Naive thymus-derived CD4-positive, alpha-beta T cell (primary cell): ENCODE measurements at regions of chr2 and their contacts with region 1.

Region 1: GRCh38 chr2:234164493-234165413 is 114.3 kb downstream of the SPP2 start:
- DNase-seq: peak in 7 of 9 donors; percentile 19 to 42 (median 37)
- ATAC-seq: peak; percentile 92
- H3K4me3 ChIP-seq: no peak overlapping the region
- H3K4me3 Mint-ChIP-seq: peak overlapping the region in 7 of 10 donors; percentile 18 to 78 (median 50)
- H3K27ac ChIP-seq: no peak overlapping the region
- H3K27ac Mint-ChIP-seq: peak overlapping the region; percentile 2 to 82 (median 51)
- H3K4me1 ChIP-seq: peaks cover 5 to 14% of the 10 kb centered on the region in 2 donors
- H3K4me1 Mint-ChIP-seq: peaks cover 11 to 44% (median 31%) of the 10 kb centered on the region in 7 donors
- H3K27me3 ChIP-seq: no peaks in the 10 kb centered on the region
- H3K27me3 Mint-ChIP-seq: no peaks in the 10 kb centered on the region

Region 2: DNA sequence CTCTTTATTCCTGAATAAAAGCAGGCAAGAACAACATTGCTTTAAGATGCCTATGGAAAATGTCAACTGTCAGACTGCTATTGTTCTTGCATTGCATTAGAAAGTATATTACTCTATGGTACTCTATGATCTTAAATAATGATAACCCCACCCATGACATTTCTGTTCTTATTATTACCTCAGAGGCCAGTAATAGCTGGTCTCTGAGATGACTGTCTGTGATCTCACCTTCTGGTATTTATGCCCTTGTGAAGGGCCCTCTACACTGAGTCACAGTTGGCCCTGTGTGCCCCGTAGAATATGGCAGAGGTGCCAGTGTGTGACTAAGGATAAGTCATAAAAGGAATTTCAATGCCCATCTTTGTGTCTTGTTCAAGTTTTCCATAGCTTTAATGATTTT is 53.2 kb before region 1 on chr2:
- CTCF ChIA-PET with region 1: no interaction called
- POLR2A ChIA-PET with region 1: no interaction called
- intact Hi-C with region 1: no loop called
- DNase-seq: no peak
- ATAC-seq: no peak
- H3K4me3 ChIP-seq: no peak overlapping the region
- H3K4me3 Mint-ChIP-seq: no peak overlapping the region
- H3K27ac ChIP-seq: no peak overlapping the region
- H3K27ac Mint-ChIP-seq: no peak overlapping the region
- H3K4me1 ChIP-seq: no peaks in the 10 kb centered on the region
- H3K4me1 Mint-ChIP-seq: no peaks in the 10 kb centered on the region
- H3K27me3 ChIP-seq: no peaks in the 10 kb centered on the region
- H3K27me3 Mint-ChIP-seq: peaks cover 0 to 51% (median 4%) of the 10 kb centered on the region in 5 donors

Region 3: DNA sequence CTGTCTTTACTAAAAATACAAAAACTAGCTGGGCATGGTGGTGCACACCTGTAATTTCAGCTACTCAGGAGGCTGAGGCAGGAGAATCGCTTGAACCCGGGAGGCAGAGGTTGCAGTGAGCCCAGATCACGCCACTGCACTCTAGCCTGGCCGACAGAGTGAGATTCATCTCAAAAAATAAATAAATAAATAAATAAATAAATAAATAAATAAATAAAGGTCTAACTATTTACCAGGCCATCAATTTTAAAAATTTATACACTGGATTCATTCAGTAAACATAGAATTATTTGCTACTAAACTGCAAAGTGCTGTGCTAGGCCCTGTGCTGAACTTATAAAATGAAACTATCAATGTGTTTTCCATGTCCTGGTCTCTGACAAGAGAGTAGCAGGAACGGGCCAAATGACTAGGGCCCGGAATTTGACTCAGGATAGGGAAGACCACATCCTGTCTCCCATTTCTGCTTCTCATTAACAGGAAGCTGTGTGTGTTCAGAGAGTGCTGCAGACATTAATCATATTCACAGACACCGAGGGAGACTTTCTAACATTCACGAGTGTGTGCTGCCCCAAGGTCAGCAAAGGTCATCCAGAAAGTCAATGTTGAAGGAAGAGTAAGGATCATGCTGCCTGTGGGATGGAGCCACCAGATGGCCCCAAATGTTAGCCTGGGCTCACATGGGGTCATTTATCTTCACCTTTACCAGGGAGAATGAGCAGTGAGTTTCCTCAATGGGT is 18.5 kb before region 1 on chr2:
- CTCF ChIA-PET with region 1: interaction called, 5 read pairs
- POLR2A ChIA-PET with region 1: no interaction called
- intact Hi-C with region 1: loop called in 1 of 2 experiments (anchors 2 kb)
- DNase-seq: no peak
- ATAC-seq: no peak
- H3K4me3 ChIP-seq: no peak overlapping the region
- H3K4me3 Mint-ChIP-seq: peak overlapping the region; percentile 17 to 74 (median 46)
- H3K27ac ChIP-seq: no peak overlapping the region
- H3K27ac Mint-ChIP-seq: peak overlapping the region in 8 of 9 donors; percentile 25 to 87 (median 68)
- H3K4me1 ChIP-seq: peaks cover 29 to 37% of the 10 kb centered on the region in 2 donors
- H3K4me1 Mint-ChIP-seq: peaks cover 19 to 57% (median 44%) of the 10 kb centered on the region in 7 donors
- H3K27me3 ChIP-seq: no peaks in the 10 kb centered on the region
- H3K27me3 Mint-ChIP-seq: no peaks in the 10 kb centered on the region

Region 4: DNA sequence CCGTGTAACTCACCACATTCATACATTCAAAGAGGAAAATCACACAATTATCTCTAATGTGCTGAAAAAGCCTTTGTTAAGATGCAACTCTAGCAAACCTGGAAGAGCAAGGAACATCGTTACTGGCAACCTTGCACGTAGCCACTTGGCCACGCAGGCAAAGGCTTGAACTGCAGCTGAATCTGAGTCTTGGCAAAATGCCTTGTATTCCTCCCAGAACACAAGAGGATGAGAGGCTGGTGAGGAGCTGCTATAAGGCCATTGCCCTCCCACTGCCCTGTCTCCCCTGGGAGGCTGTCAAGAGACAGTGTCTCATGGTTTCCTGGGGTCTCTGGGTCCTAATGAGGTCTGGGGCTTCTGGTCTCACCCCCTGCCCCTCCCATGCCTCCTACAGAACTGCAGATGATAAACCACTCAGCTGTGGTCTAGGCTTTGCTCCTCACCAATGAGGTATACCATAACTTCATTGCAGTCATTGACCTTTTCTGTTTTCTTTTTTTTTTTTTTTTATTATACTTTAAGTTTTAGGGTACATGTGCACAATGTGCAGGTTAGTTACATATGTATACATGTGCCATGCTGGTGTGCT is 27.2 kb after region 1 on chr2:
- CTCF ChIA-PET with region 1: no interaction called
- POLR2A ChIA-PET with region 1: no interaction called
- intact Hi-C with region 1: no loop called
- DNase-seq: no peak
- ATAC-seq: no peak
- H3K4me3 ChIP-seq: no peak overlapping the region
- H3K4me3 Mint-ChIP-seq: no peak overlapping the region
- H3K27ac ChIP-seq: no peak overlapping the region
- H3K27ac Mint-ChIP-seq: no peak overlapping the region
- H3K4me1 ChIP-seq: no peaks in the 10 kb centered on the region
- H3K4me1 Mint-ChIP-seq: peaks cover 0 to 16% (median 3%) of the 10 kb centered on the region in 7 donors
- H3K27me3 ChIP-seq: no peaks in the 10 kb centered on the region
- H3K27me3 Mint-ChIP-seq: peaks cover 0 to 33% (median 0%) of the 10 kb centered on the region in 5 donors